GM12878 (cell line): ENCODE measurements at regions of chr3 and their contacts with region 1.

Region 1: GRCh38 chr3:190012314-190012782 is 108.3 kb downstream of the P3H2 start:
- DNase-seq: no peak
- ATAC-seq: no peak
- H3K4me3 ChIP-seq: no peak overlapping the region
- H3K27ac ChIP-seq: no peak overlapping the region
- H3K4me1 ChIP-seq: no peaks in the 10 kb centered on the region
- H3K27me3 ChIP-seq: no peaks in the 10 kb centered on the region; a peak in 1 of 4 replicates
- CTCF ChIP-seq: no peak
- EP300 ChIP-seq: no peak
- POLR2A ChIP-seq: no peak
- RAD21 ChIP-seq: no peak

Region 2: GRCh38 chr3:189883113-189883753 is 129.1 kb before region 1 on chr3:
- CTCF ChIA-PET with region 1: no interaction called
- POLR2A ChIA-PET with region 1: no interaction called
- RAD21 ChIA-PET with region 1: no interaction called
- SMC1A ChIA-PET with region 1: no interaction called
- in situ Hi-C with region 1: no loop called
- intact Hi-C with region 1: no loop called
- DNase-seq: no peak
- ATAC-seq: peak; percentile 69
- H3K4me3 ChIP-seq: no peak overlapping the region
- H3K27ac ChIP-seq: no peak overlapping the region
- H3K4me1 ChIP-seq: no peaks in the 10 kb centered on the region
- H3K27me3 ChIP-seq: no peaks in the 10 kb centered on the region
- CTCF ChIP-seq: no peak
- EP300 ChIP-seq: no peak
- POLR2A ChIP-seq: no peak
- RAD21 ChIP-seq: no peak

Region 3: DNA sequence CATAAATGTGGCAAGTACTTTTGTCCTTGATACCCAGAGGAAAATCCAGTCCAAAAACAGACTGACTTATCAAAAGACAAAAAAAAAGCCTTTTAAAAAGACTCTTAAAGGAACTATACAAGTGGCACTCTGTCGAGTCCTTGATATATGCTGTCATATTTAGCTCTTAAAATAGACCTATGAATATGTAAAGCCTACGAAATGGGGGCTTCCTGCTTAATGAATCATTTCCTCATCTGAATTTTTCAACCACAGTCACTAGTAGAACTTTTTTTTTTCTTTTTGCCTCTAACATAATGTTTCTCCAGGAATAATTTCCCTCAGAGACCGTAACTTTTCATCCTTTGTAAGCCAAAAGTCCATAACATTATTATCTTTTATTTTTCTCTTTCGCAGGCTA is 12.6 kb after region 1 on chr3:
- CTCF ChIA-PET with region 1: interaction called, 5 read pairs
- POLR2A ChIA-PET with region 1: interaction called, 4 read pairs
- RAD21 ChIA-PET with region 1: interaction called, 7 read pairs
- SMC1A ChIA-PET with region 1: interaction called, 12 read pairs
- in situ Hi-C with region 1: no loop called
- intact Hi-C with region 1: no loop called
- DNase-seq: no peak
- ATAC-seq: peak; percentile 84
- H3K4me3 ChIP-seq: no peak overlapping the region
- H3K27ac ChIP-seq: no peak overlapping the region
- H3K4me1 ChIP-seq: no peaks in the 10 kb centered on the region
- H3K27me3 ChIP-seq: no peaks in the 10 kb centered on the region
- CTCF ChIP-seq: no peak
- EP300 ChIP-seq: no peak
- POLR2A ChIP-seq: no peak
- RAD21 ChIP-seq: no peak